ENCODE measurements at regions of chrX and their contacts with region 1.

Region 1: GRCh38 chrX:53683556-53684414 is 2.7 kb downstream of the HUWE1 start:
- DNase-seq: peak; percentile 65 to 96 (median 92)
- ATAC-seq: peak; percentile 88
- H3K4me3 ChIP-seq: peak overlapping the region; percentile 71
- H3K4me3 Mint-ChIP-seq: peak overlapping the region; percentile 88 to 97 (median 93)
- H3K27ac ChIP-seq: peak overlapping the region; percentile 95
- H3K27ac Mint-ChIP-seq: peak overlapping the region; percentile 93 to 98 (median 96)
- H3K4me1 ChIP-seq: peaks cover 5 to 12% of the 10 kb centered on the region in 2 donors
- H3K4me1 Mint-ChIP-seq: peaks cover 9 to 51% (median 35%) of the 10 kb centered on the region in 7 donors
- H3K27me3 ChIP-seq: no peaks in the 10 kb centered on the region
- H3K27me3 Mint-ChIP-seq: no peaks in the 10 kb centered on the region

Region 2: DNA sequence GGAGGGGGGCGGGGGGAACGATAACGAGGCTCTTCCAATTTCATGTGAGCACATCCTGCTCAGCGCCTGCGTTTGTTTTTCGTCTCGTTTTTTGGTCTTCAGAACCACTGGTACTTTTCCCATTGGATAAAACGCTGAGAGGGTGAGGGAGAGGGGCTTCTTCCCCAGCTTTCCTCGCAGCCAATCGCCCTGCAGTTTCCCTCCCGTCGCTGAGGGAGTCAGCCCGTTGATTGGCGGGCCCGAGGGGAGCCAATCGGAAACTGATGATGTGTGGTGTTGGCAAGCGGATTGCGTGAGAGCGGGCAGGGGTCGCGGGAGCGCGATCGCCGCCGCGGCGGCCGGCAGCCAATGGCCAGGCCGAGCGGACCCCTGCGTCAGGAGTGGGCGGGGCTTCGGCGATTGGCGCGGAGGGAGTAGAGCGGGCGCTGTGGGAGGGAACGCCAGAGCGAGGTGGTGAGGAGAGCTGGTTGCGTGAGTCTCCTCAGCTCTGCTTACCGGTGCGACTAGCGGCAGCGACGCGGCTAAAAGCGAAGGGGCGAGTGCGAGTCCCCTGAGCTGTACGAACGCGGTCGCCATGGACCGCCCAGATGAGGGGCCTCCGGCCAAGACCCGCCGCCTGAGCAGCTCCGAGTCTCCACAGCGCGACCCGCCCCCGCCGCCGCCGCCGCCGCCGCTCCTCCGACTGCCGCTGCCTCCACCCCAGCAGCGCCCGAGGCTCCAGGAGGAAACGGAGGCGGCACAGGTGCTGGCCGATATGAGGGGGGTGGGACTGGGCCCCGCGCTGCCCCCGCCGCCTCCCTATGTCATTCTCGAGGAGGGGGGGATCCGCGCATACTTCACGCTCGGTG is 601.6 kb before region 1 on chrX and contains the start of gene TSPYL2:
- CTCF ChIA-PET with region 1: no interaction called
- POLR2A ChIA-PET with region 1: interaction called, 3 read pairs
- intact Hi-C with region 1: loop called in 1 of 2 experiments (anchors 10 kb)
- DNase-seq: peak; percentile 83 to 96 (median 93)
- ATAC-seq: peak; percentile 91
- H3K4me3 ChIP-seq: peak within 1 kb of the TSS; percentile 64
- H3K4me3 Mint-ChIP-seq: peak within 1 kb of the TSS; percentile 87 to 98 (median 92)
- H3K27ac ChIP-seq: peak within 1 kb of the TSS; percentile 85
- H3K27ac Mint-ChIP-seq: peak within 1 kb of the TSS; percentile 96 to 99 (median 97)
- H3K4me1 ChIP-seq: peaks cover 0 to 12% of the 10 kb centered on the region in 2 donors
- H3K4me1 Mint-ChIP-seq: peaks cover 25 to 47% (median 38%) of the 10 kb centered on the region in 7 donors
- H3K27me3 ChIP-seq: no peaks in the 10 kb centered on the region
- H3K27me3 Mint-ChIP-seq: peaks cover 0 to 3% (median 0%) of the 10 kb centered on the region in 5 donors
- total RNA-seq, gene TSPYL2: 23.4 to 239 (median 166) TPM

Region 3: GRCh38 chrX:53160297-53160984 is 523.3 kb before region 1 on chrX:
- CTCF ChIA-PET with region 1: no interaction called
- POLR2A ChIA-PET with region 1: no interaction called
- intact Hi-C with region 1: no loop called
- DNase-seq: no peak
- ATAC-seq: no peak
- H3K4me3 ChIP-seq: no peak overlapping the region
- H3K4me3 Mint-ChIP-seq: no peak overlapping the region
- H3K27ac ChIP-seq: no peak overlapping the region
- H3K27ac Mint-ChIP-seq: peak overlapping the region in 2 of 9 donors; percentile 23 to 54
- H3K4me1 ChIP-seq: no peaks in the 10 kb centered on the region
- H3K4me1 Mint-ChIP-seq: peaks cover 0 to 10% (median 0%) of the 10 kb centered on the region in 7 donors
- H3K27me3 ChIP-seq: no peaks in the 10 kb centered on the region
- H3K27me3 Mint-ChIP-seq: no peaks in the 10 kb centered on the region

Region 4: DNA sequence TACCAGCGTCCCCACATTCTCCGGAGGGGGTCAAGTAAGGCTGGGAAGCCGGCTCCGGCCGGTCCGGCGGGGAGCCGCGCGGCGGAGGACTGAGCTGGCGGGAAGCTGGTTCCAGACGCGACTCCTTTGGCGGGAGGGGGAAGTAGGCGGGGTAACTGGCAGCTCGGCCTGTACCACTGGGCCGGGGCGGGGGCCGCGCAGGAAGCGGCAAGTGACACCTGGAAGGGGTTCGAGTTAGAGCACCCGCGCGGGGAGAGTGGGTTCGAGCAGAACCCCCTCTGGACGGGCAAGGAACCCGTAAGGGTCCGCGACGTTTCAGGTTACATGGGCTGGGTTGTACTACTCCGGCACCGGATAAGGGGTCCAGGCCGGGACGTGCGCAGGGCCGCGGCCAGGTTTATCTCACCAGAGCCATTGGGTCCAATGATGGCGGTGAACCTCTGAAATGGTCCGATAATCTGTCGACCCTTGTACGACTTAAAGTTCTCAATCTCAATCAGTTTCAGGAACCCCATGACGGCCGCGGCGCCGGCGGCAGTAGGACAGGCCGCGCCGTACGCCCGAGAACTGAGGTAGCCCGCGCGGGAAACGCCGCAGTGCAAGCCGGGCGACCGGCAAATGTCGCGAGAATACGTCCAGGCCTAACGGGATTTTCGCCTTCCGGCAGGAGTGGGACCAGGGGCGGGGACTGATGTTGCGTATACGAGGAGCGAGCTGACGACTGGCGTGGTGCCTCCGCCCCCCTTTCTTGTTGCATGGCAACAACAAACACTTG is 261.5 kb before region 1 on chrX and contains the start of gene SMC1A:
- CTCF ChIA-PET with region 1: no interaction called
- POLR2A ChIA-PET with region 1: no interaction called
- intact Hi-C with region 1: loop called (anchors 1 kb)
- DNase-seq: peak; percentile 80 to 99 (median 98)
- ATAC-seq: peak; percentile 92
- H3K4me3 ChIP-seq: peak within 1 kb of the TSS; percentile 91
- H3K4me3 Mint-ChIP-seq: peak within 1 kb of the TSS; percentile 89 to 100 (median 96)
- H3K27ac ChIP-seq: peak within 1 kb of the TSS; percentile 91
- H3K27ac Mint-ChIP-seq: peak within 1 kb of the TSS; percentile 93 to 100 (median 99)
- H3K4me1 ChIP-seq: peaks cover 10 to 15% of the 10 kb centered on the region in 2 donors
- H3K4me1 Mint-ChIP-seq: peaks cover 12 to 46% (median 30%) of the 10 kb centered on the region in 7 donors
- H3K27me3 ChIP-seq: no peaks in the 10 kb centered on the region
- H3K27me3 Mint-ChIP-seq: no peaks in the 10 kb centered on the region
- total RNA-seq, gene SMC1A: 53.0 to 108 (median 67.7) TPM

Region 5: GRCh38 chrX:53594354-53594753 is 89.4 kb before region 1 on chrX:
- CTCF ChIA-PET with region 1: no interaction called
- POLR2A ChIA-PET with region 1: no interaction called
- intact Hi-C with region 1: no loop called
- DNase-seq: no peak
- ATAC-seq: no peak
- H3K4me3 ChIP-seq: no peak overlapping the region
- H3K4me3 Mint-ChIP-seq: no peak overlapping the region
- H3K27ac ChIP-seq: no peak overlapping the region
- H3K27ac Mint-ChIP-seq: no peak overlapping the region
- H3K4me1 ChIP-seq: no peaks in the 10 kb centered on the region
- H3K4me1 Mint-ChIP-seq: peaks cover 0 to 11% (median 0%) of the 10 kb centered on the region in 7 donors
- H3K27me3 ChIP-seq: no peaks in the 10 kb centered on the region
- H3K27me3 Mint-ChIP-seq: no peaks in the 10 kb centered on the region

Region 6: GRCh38 chrX:53743244-53743643 is 59.5 kb after region 1 on chrX:
- CTCF ChIA-PET with region 1: no interaction called
- POLR2A ChIA-PET with region 1: interaction called, 3 read pairs
- intact Hi-C with region 1: loop called in 1 of 2 experiments (anchors 2 kb)
- DNase-seq: no peak
- ATAC-seq: no peak
- H3K4me3 ChIP-seq: no peak overlapping the region
- H3K4me3 Mint-ChIP-seq: no peak overlapping the region
- H3K27ac ChIP-seq: no peak overlapping the region
- H3K27ac Mint-ChIP-seq: no peak overlapping the region
- H3K4me1 ChIP-seq: no peaks in the 10 kb centered on the region
- H3K4me1 Mint-ChIP-seq: peaks cover 0 to 9% (median 0%) of the 10 kb centered on the region in 7 donors
- H3K27me3 ChIP-seq: no peaks in the 10 kb centered on the region
- H3K27me3 Mint-ChIP-seq: no peaks in the 10 kb centered on the region

Region 7: GRCh38 chrX:54182864-54183608 is 499.3 kb after region 1 on chrX and contains the start of gene FAM120C:
- CTCF ChIA-PET with region 1: no interaction called
- POLR2A ChIA-PET with region 1: no interaction called
- intact Hi-C with region 1: loop called (anchors 1 to 2 kb)
- DNase-seq: peak; percentile 23 to 70 (median 65)
- ATAC-seq: peak; percentile 79
- H3K4me3 ChIP-seq: peak within 1 kb of the TSS; percentile 62
- H3K4me3 Mint-ChIP-seq: peak within 1 kb of the TSS; percentile 70 to 92 (median 88)
- H3K27ac ChIP-seq: peak within 1 kb of the TSS; percentile 78
- H3K27ac Mint-ChIP-seq: peak within 1 kb of the TSS; percentile 81 to 91 (median 88)
- H3K4me1 ChIP-seq: peaks cover 22 to 27% of the 10 kb centered on the region in 2 donors
- H3K4me1 Mint-ChIP-seq: peaks cover 30 to 42% (median 39%) of the 10 kb centered on the region in 7 donors
- H3K27me3 ChIP-seq: no peaks in the 10 kb centered on the region
- H3K27me3 Mint-ChIP-seq: no peaks in the 10 kb centered on the region
- total RNA-seq, gene FAM120C: 13.5 to 24.7 (median 17.6) TPM

Region 8: DNA sequence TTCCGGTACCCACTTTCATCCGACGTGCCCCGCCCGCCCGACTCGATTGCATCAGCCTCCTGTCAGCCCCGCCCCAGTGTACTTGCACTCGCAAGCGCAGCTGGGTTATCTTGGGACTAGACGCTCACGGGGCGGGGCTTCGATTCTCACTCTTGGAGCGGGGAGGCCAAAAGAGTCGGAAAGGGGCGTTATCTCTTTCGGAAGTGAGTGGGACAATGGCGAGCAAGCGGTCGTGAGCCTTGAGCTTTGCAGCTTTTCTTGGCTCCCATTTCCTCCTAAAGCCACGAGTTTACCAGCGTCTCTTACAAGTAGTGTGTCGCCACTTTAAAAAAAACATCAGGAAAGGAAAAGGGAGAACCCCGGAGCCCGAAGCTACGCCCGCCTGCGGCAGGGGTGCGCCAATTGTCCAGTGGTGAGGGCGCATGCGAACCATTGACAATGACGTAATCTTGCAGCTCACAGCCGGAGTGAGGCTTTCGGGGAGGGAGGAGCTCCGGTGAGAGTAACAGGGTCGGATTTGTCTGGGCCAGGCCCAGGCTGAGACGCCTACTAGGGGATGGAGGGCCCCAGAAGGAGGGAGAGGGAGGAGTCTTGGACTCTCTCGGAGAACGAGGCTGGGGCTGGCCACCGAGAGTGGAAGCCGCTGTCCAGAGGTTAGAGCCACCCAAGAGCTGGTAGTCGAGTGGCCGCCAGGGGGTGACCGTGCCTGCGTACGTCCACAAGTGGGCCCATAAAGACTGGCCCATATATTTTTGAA is 955.7 kb after region 1 on chrX:
- CTCF ChIA-PET with region 1: no interaction called
- POLR2A ChIA-PET with region 1: no interaction called
- intact Hi-C with region 1: loop called (anchors 1 to 10 kb)
- DNase-seq: peak; percentile 73 to 95 (median 89)
- ATAC-seq: peak; percentile 93
- H3K4me3 ChIP-seq: peak overlapping the region; percentile 64
- H3K4me3 Mint-ChIP-seq: peak overlapping the region; percentile 74 to 98 (median 94)
- H3K27ac ChIP-seq: peak overlapping the region; percentile 98
- H3K27ac Mint-ChIP-seq: peak overlapping the region; percentile 96 to 100 (median 99)
- H3K4me1 ChIP-seq: peaks cover 4% of the 10 kb centered on the region in 2 donors
- H3K4me1 Mint-ChIP-seq: peaks cover 0 to 16% (median 10%) of the 10 kb centered on the region in 7 donors
- H3K27me3 ChIP-seq: no peaks in the 10 kb centered on the region
- H3K27me3 Mint-ChIP-seq: no peaks in the 10 kb centered on the region

Measured in naive thymus-derived CD4-positive, alpha-beta T cell (primary cell).